ENCODE measurements at regions of chr10 and their contacts with region 1.

Region 1: DNA sequence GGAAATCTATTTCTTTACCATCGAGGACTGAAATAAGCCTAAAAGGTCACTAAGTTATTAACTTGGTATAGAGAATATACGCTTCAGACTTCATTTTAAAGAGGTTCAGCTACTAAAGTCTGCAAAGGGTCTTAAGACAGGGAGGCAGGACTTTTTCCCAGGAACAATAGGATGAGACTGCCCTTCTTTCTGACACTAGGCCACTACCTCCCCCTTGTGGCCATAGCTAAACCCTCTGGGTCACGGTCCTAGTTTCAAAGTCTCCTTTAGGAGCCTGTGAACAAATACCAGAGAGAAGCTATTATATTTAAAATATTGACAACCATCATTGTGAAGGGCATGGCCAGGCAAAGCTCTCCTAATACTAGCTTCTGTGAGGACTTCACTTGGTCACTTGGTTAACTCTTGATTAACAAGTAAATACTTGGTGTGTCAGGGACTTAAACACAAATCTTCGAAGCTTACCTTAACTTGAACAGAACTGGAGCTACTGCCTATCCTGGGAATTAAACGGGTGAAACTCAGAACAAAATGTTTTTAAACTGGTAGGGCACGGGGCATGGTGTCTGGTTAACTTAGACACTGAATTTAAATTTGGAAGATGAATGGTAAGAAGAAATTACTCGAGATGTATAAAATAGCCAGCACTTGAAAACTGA is 75.6 kb downstream of the CCDC6 start:
- DNase-seq: no peak
- H3K4me3 ChIP-seq: no peak overlapping the region
- H3K27me3 ChIP-seq: no peaks in the 10 kb centered on the region
- CTCF ChIP-seq: peak; percentile 92

Region 2: DNA sequence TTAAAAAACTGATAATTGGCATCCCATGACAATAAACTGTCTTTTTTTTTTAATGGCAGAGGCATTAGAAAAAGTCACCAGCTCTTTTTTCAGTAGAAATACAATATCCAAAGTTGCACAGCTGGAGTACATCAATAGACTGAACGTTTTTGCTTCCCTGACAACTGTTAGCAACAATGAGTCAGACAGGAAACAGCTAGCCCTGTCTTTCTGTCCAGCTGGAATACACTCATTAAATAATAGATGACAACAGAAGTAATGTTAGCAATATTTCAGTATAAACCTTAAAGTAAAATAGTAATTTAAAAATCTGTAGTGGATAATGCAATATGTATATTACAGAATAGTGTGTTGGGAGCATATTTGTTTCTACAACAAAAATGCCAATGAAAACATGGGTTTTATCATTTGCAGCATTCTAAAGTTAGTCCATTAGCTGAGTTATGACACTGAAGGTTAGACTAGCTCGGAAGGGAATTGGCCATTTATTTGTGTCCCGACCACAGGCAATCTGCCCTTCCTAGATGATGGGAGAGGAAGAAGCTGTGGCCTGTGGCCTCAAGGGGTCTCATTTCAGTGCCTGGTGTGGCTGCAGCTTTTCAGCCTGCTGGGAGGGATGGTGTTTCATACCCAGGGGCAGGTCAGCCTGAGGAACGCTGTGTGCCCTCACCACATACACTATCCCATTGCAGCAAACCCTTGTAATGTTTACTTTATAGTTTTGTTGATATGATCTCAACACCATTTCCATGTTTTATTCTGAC is 294.4 kb before region 1 on chr10:
- CTCF ChIA-PET with region 1: no interaction called
- POLR2A ChIA-PET with region 1: no interaction called
- DNase-seq: peak; percentile 7
- H3K4me3 ChIP-seq: no peak overlapping the region
- H3K27me3 ChIP-seq: no peaks in the 10 kb centered on the region
- CTCF ChIP-seq: no peak

Region 3: GRCh38 chr10:59817773-59818172 is 13.0 kb before region 1 on chr10:
- CTCF ChIA-PET with region 1: interaction called, 15 read pairs
- POLR2A ChIA-PET with region 1: no interaction called
- DNase-seq: no peak
- H3K4me3 ChIP-seq: no peak overlapping the region
- H3K27me3 ChIP-seq: no peaks in the 10 kb centered on the region
- CTCF ChIP-seq: no peak

Region 4: DNA sequence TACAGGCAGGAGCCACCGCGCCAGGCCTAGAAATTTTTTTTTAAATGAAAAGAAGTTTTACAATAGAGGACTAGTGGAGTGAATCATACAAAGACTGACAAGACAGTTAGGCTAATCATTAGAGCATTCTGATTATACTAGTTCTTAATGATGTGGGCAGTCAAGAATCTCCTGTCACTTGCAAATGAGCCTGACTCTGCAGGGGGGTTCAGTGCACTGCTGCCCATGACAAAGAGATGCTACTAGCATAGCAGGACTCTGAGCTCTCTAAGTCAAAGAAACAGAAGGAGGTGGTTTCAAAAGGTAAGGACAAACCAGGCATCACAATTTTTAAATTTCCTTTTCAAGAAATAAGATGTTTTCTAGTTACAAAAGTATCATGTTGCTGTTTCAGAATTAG is 16.6 kb after region 1 on chr10:
- CTCF ChIA-PET with region 1: interaction called, 6 read pairs
- POLR2A ChIA-PET with region 1: interaction called, 12 read pairs
- DNase-seq: no peak
- H3K4me3 ChIP-seq: no peak overlapping the region
- H3K27me3 ChIP-seq: no peaks in the 10 kb centered on the region
- CTCF ChIP-seq: no peak

Region 5: GRCh38 chr10:59872892-59873463 is 42.2 kb after region 1 on chr10:
- CTCF ChIA-PET with region 1: no interaction called
- POLR2A ChIA-PET with region 1: no interaction called
- DNase-seq: peak; percentile 32
- H3K4me3 ChIP-seq: no peak overlapping the region
- H3K27me3 ChIP-seq: no peaks in the 10 kb centered on the region
- CTCF ChIP-seq: no peak

Region 6: DNA sequence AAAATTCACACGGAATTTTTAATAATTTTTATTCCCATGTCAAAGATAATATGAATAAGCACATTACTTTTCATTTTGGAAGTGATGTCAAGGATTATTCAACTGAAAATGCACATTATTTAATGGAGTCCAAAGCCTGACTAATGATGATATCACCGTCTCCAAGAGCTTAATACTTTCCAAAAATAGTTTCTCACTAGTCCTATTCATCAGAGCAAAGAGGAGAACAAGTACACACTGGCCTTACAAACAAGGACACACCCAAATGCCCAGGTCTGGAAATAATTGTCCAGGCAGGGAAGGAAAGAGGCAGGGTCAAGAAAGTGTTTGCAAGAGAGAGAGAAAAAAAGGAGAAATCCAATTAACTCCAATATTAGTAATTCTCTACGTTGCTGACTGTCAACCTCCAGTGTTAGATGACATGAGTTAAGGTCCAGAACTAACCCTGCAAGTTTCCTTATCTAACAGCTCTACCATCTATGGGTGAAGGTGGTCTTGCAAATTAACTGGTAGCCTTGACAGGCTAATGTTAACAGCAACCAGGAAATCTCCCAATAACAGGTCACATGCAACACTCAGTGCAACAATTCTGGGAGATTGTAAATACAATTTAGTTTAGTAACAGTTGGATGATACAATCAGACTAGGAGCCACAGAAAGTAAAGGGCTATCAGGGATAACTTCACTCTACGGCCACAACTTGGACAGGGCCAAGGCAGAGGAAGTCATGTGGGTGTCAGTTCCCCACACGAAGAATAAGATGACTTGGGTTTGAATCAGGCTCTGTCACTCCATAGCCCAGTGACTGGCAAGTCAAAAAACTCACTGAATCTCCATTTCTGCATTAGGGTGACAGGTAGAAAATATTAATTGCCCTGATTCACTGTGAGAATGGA is 292.7 kb after region 1 on chr10:
- CTCF ChIA-PET with region 1: no interaction called
- POLR2A ChIA-PET with region 1: no interaction called
- DNase-seq: peak; percentile 76
- H3K4me3 ChIP-seq: no peak overlapping the region
- H3K27me3 ChIP-seq: no peaks in the 10 kb centered on the region
- CTCF ChIP-seq: no peak

Measured in BJ (cell line).